A549 (cell line): ENCODE measurements at regions of chr5 and their contacts with region 1.

Region 1: GRCh38 chr5:81194633-81195333 is 38.3 kb upstream of the CKMT2 start:
- DNase-seq: peak; percentile 79 to 88
- ATAC-seq: peak; percentile 98 to 100
- H3K4me3 ChIP-seq: no peak overlapping the region
- H3K27ac ChIP-seq: no peak overlapping the region
- H3K4me1 ChIP-seq: no peaks in the 10 kb centered on the region
- CTCF ChIP-seq: peak; percentile 93
- EP300 ChIP-seq: no peak
- POLR2A ChIP-seq: no peak
- RAD21 ChIP-seq: peak; percentile 90 to 94

Region 2: DNA sequence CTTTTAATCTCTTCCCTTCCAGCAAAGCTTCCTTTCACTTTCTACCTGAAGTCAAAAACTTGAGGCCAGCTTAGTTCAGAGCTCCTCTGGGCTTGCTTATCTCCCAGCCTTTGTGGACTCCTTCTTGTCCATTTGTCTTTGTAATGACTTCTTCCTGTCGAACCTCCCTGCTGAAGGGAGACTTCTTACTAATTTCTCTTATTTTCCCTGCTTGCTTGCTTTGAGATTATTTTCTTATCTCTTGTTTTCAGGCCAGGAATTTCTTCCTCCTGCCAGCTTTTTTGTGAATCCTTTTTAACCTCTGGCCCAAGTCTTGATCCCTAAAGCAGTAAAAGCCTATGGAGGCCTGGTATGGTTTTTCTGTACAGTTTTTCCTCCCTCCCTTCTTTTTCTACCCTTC is 493.2 kb before region 1 on chr5:
- CTCF ChIA-PET with region 1: interaction called, 11 read pairs
- POLR2A ChIA-PET with region 1: no interaction called
- DNase-seq: no peak
- ATAC-seq: no peak
- H3K4me3 ChIP-seq: no peak overlapping the region
- H3K27ac ChIP-seq: no peak overlapping the region
- H3K4me1 ChIP-seq: no peaks in the 10 kb centered on the region
- CTCF ChIP-seq: no peak
- EP300 ChIP-seq: no peak
- POLR2A ChIP-seq: no peak
- RAD21 ChIP-seq: no peak

Region 3: GRCh38 chr5:80711938-80712337 is 482.8 kb before region 1 on chr5:
- CTCF ChIA-PET with region 1: interaction called, 18 read pairs
- POLR2A ChIA-PET with region 1: no interaction called
- DNase-seq: peak; percentile 31 to 54
- ATAC-seq: peak; percentile 96 to 97
- H3K4me3 ChIP-seq: no peak overlapping the region
- H3K27ac ChIP-seq: no peak overlapping the region
- H3K4me1 ChIP-seq: 0 out of 3 replicates have a peak, but pooled peaks cover 4% of the 10 kb centered on the region
- CTCF ChIP-seq: peak; percentile 55
- EP300 ChIP-seq: no peak
- POLR2A ChIP-seq: no peak
- RAD21 ChIP-seq: peak; percentile 70 to 74

Region 4: DNA sequence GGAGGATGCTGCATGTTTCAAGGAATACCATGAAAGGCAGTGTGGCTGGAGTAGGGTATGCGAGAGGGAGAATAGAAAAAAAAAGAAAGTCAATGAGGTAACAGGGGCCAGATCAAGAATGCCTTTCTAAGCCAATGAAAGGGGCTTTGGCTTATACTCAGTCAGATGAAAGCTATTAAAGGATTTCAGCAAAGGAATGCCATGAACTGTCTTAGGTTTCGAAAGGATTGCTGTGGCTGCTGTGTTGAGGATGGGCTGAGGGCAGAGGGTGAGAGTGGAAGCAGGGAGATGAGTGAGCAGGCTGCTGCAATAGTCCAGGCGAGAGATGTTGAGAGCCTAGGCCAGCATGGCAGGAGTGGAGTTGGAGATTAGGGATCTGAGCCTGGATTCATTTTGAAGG is 97.1 kb before region 1 on chr5:
- CTCF ChIA-PET with region 1: no interaction called
- POLR2A ChIA-PET with region 1: no interaction called
- DNase-seq: no peak
- ATAC-seq: no peak
- H3K4me3 ChIP-seq: no peak overlapping the region
- H3K27ac ChIP-seq: no peak overlapping the region
- H3K4me1 ChIP-seq: no peaks in the 10 kb centered on the region
- CTCF ChIP-seq: no peak
- EP300 ChIP-seq: no peak
- POLR2A ChIP-seq: no peak
- RAD21 ChIP-seq: no peak

Region 5: GRCh38 chr5:81183811-81184748 is 10.7 kb before region 1 on chr5:
- CTCF ChIA-PET with region 1: interaction called, 23 read pairs
- POLR2A ChIA-PET with region 1: no interaction called
- DNase-seq: no peak
- ATAC-seq: no peak
- H3K4me3 ChIP-seq: no peak overlapping the region
- H3K27ac ChIP-seq: no peak overlapping the region
- H3K4me1 ChIP-seq: no peaks in the 10 kb centered on the region
- CTCF ChIP-seq: no peak
- EP300 ChIP-seq: no peak
- POLR2A ChIP-seq: no peak
- RAD21 ChIP-seq: no peak

Region 6: GRCh38 chr5:81207009-81207408 is 12.2 kb after region 1 on chr5:
- CTCF ChIA-PET with region 1: interaction called, 39 read pairs
- POLR2A ChIA-PET with region 1: no interaction called
- DNase-seq: peak; percentile 13 to 14
- ATAC-seq: peak; percentile 67 to 81; a peak in 4 of 6 replicates
- H3K4me3 ChIP-seq: no peak overlapping the region
- H3K27ac ChIP-seq: no peak overlapping the region
- H3K4me1 ChIP-seq: no peaks in the 10 kb centered on the region
- CTCF ChIP-seq: no peak
- EP300 ChIP-seq: no peak
- POLR2A ChIP-seq: no peak
- RAD21 ChIP-seq: no peak

Region 7: DNA sequence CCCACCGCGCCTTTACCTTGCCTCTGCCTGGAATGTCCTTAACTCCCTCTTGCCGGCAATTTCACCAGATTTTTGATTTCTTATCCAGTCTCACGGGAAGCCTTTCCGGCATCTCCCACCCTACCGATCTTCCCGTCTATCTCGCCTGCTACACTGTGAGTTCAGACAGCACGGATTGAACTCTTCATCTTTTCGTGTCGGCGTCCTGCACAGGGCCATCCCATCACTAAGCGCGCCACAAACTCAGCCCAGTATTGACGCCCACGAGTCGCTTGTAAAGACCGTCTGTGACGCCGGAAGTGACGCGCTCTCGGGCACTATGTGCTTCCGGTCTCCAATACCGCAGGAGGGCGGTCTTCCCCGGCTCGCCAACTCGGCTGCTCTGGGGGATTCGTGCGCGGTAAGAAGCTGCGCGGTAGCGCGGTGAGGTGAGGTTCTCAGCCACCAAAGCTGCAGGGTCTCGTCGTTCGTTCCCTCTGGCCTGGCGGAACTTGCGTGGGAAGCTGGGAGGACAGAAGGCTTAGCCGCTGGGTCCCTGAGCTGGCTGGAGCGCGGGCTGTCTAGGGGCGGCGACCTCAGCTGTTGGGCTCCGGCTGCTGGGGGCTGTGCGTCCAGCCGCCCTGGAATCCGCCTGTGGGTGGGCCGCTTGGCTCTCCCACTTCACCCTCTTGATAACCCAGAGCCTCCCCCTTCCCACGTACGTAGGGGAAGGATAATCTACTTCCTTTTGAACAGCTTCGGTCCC is 106.7 kb after region 1 on chr5 and contains the start of gene ZCCHC9:
- CTCF ChIA-PET with region 1: interaction called, 11 read pairs
- POLR2A ChIA-PET with region 1: no interaction called
- DNase-seq: peak; percentile 73 to 95
- ATAC-seq: peak; percentile 97 to 99
- H3K4me3 ChIP-seq: peak within 1 kb of the TSS; percentile 73
- H3K27ac ChIP-seq: peak within 1 kb of the TSS; percentile 86 to 99
- H3K4me1 ChIP-seq: peaks cover 23% of the 10 kb centered on the region
- CTCF ChIP-seq: no peak
- EP300 ChIP-seq: no peak
- POLR2A ChIP-seq: peak; percentile 94
- RAD21 ChIP-seq: no peak
- polyA plus RNA-seq, gene ZCCHC9: 27.3 and 44.4 TPM in 2 replicates